ENCODE measurements at regions of chr5 and their contacts with region 1.

Region 1: DNA sequence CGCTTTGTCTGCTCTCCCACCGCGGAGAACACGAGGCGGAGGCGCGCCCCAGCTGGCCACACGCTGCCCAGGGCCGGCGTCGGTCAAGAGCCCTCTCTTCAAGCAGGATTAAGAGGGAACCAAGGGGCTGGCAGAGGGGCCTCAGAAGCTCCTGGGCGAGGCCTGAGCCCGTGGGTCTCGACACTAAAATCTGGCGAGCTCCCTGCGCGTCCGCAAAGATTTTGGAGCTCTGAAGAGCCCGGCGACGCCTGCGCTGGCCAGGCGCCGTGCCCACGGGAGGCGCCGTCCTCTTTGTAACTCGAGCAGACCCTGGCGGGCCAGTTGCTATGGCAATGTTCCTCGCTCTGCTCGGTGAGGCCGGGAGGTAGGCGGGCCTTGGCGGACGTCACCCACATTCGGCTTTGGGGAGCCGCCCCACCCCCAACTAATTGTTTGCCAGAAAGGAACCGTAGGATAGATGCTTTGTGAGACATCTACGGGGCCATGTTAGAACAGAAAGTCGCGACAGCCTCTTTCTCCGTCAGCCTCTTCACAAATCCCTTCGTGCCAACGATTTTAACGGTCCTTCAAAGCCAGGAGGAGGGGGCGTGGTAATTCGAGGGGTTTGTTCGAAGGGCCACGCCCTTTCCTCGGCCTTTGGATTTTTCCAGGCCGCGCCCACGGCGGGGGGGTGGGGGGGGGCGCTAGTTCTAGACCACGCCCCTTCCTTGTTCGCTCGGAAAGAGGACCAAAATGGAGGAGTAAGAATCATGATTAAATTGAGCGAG is 714 bp upstream of the CNOT8 start:
- DNase-seq: peak; percentile 93
- H3K4me3 ChIP-seq: peak overlapping the region; percentile 68 to 88 (median 86)
- H3K27ac ChIP-seq: peak overlapping the region; percentile 92
- H3K4me1 ChIP-seq: peaks cover 17% of the 10 kb centered on the region
- H3K27me3 ChIP-seq: no peaks in the 10 kb centered on the region
- CTCF ChIP-seq: no peak

Region 2: DNA sequence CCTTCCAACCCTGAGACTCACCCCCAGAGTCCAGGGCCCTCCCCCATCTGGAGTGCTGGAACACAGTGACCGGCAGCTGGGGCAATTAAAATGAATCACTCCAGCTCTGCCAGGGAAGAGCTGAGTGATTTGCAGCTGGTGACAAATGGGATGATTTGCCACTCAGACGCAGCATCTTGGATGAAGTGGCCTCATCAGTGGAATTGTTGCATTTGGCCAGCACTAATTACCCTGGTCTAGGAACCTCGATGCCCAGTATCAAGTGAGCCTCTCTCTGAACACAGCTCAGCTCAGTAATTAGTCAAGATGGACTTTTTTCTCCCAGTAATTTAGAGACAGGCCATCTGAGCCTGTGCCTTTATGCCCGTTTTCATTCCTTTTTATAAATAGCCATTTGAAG is 1107.8 kb before region 1 on chr5:
- CTCF ChIA-PET with region 1: no interaction called
- dilution Hi-C with region 1: no loop called
- in situ Hi-C with region 1: no loop called
- intact Hi-C with region 1: no loop called
- DNase-seq: no peak
- H3K4me3 ChIP-seq: no peak overlapping the region
- H3K27ac ChIP-seq: no peak overlapping the region
- H3K4me1 ChIP-seq: peaks cover 15% of the 10 kb centered on the region
- H3K27me3 ChIP-seq: no peaks in the 10 kb centered on the region
- CTCF ChIP-seq: no peak

Region 3: GRCh38 chr5:154811653-154812365 is 45.9 kb before region 1 on chr5:
- CTCF ChIA-PET with region 1: no interaction called
- dilution Hi-C with region 1: no loop called
- in situ Hi-C with region 1: no loop called
- intact Hi-C with region 1: loop called (anchors 1 kb)
- DNase-seq: peak; percentile 38
- H3K4me3 ChIP-seq: no peak overlapping the region
- H3K27ac ChIP-seq: no peak overlapping the region
- H3K4me1 ChIP-seq: no peaks in the 10 kb centered on the region
- H3K27me3 ChIP-seq: no peaks in the 10 kb centered on the region
- CTCF ChIP-seq: peak; percentile 85 to 98

Region 4: DNA sequence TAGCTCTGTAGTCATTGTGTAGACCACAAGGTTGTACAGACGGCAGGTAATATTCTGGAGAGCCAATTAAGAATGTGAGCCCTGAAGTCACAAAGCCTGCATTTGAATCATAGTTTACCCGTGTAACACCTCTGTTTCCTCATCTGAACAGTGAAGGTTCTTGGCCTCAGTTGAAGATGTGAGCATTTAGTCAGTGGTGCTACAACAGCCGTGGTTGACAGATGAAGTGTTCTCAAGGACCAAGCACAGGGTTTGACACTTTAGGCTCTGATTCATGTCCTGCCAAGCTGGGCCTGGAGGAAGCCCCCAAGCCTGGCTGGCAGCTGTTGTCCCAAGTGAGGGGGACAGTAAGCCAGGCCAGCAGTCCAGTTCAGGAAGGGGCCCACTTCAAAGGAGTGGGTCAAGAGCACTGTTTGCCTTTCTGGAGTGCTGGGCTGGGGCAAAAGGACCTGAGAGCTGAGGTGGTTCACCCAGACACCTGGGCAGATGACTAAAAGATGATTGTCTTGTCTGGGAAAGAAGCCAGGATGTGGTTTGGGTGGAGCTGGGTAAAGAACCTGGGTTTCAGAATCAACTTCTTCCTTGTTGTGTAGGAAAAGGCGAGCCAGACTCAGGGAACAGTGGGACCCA is 28.0 kb before region 1 on chr5:
- CTCF ChIA-PET with region 1: no interaction called
- dilution Hi-C with region 1: no loop called
- in situ Hi-C with region 1: no loop called
- intact Hi-C with region 1: loop called (anchors 2 kb)
- DNase-seq: peak; percentile 97
- H3K4me3 ChIP-seq: peak overlapping the region in 1 of 3 experiments; percentile 16
- H3K27ac ChIP-seq: peak overlapping the region; percentile 82
- H3K4me1 ChIP-seq: peaks cover 45% of the 10 kb centered on the region
- H3K27me3 ChIP-seq: no peaks in the 10 kb centered on the region
- CTCF ChIP-seq: no peak

Region 5: DNA sequence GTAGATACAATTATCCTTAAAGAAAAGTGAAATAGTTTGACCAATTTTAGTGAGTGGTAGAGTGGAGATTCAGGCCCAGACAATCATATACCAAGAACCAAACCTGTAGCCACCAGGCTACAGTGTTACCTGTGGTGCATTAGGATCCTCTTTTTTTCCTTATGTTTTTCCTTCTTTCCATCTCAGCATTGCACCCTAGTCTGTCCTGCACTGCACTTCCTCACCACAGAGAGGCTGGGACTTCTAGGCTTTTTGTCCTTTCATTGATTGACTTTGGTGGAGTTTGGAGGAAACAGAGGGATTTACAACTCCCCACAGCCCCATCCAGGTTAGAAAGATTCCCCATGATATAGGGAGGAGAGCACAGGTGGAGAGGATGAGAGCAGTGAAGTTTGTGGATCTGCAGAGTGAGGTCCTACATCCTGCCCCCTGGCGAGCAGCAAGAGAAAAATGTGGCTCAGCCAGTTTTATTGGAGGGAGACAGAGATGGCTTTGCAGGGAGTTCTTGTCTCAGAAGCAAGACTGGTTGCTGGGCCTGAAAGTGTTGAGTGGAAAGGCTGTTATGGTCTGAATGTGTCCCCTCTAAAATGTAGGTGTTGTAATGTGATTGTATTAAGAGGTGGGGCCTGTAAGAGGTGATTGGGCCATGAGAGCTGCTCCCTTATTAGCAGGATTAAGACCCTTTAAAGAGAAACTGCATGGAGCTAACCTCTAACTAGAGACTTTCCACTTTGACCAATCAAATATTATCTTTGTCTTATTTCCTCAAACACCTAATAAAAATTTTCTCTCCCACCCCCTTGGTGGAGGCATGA is 192.1 kb after region 1 on chr5:
- CTCF ChIA-PET with region 1: no interaction called
- dilution Hi-C with region 1: no loop called
- in situ Hi-C with region 1: no loop called
- intact Hi-C with region 1: no loop called
- DNase-seq: peak; percentile 9
- H3K4me3 ChIP-seq: no peak overlapping the region
- H3K27ac ChIP-seq: no peak overlapping the region
- H3K4me1 ChIP-seq: no peaks in the 10 kb centered on the region
- H3K27me3 ChIP-seq: no peaks in the 10 kb centered on the region
- CTCF ChIP-seq: peak; percentile 24 to 47